Activated CD8-positive, alpha-beta T cell treated with anti-CD3 and anti-CD28 coated beads, Interleukin-2, amount 10 ng/mL, durations not matched to agents 7 days and 5 days (primary cell): ENCODE measurements at regions of chr11 and their contacts with region 1.

Region 1: GRCh38 chr11:3854977-3855807 is at the start of gene STIM1:
- DNase-seq: peak; percentile 98
- ATAC-seq: peak; percentile 77
- H3K4me3 Mint-ChIP-seq: peak within 1 kb of the TSS; percentile 88
- H3K27ac Mint-ChIP-seq: peak within 1 kb of the TSS; percentile 99
- H3K4me1 Mint-ChIP-seq: peaks cover 59% of the 10 kb centered on the region
- H3K27me3 Mint-ChIP-seq: no peaks in the 10 kb centered on the region
- total RNA-seq, gene STIM1: 97.3 to 104 TPM

Region 2: DNA sequence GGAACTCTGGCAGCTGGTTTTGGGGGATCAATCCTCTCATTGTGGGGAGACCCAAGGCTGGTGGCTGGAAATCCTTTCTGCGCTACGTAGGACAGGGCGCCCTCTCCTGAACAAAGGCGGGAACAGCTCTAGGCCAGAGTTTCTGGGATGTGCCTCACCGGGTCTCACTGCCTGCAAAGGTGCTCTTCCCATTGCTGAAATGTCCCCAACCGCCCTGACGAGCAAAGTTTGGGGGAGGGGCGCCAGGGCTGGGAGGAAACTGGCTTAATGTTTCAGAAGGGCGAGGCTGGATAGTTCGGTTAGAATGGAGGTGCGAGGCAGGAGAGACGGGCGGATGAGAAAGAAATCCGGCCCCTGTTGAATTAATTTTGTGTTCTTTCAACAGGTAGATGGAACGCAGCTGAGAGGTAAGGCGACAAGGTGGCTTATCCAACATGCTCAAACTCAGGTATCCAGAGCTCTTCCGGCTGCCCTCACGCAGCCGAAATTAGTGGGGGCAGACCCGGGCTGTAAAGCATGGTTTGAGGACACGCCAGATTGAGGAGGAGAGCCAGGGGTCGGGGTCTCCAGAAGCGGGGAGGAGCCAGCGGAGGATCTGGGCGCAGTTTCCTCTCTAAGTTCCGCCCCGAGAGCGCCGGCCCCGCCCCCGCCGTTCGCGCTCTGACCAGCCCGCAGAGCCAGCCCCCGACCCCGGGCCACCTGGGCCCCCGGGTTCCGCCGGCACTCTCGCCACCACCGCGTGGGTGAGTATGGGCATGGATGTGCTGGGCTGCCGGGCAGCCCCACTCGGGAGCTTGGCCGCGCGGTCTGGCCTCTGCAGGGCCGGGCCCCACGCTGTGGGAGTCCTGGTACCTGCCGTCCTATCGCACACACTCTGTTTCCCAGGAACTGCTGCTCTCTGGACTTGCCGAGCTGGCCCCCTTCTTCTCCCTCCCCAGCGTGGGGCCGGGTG is 47.0 kb before region 1 on chr11 and contains the start of gene PGAP2:
- CTCF ChIA-PET with region 1: interaction called, 11 read pairs
- POLR2A ChIA-PET with region 1: interaction called, 3 read pairs
- DNase-seq: peak; percentile 64
- ATAC-seq: peak; percentile 87
- H3K4me3 Mint-ChIP-seq: peak within 1 kb of the TSS; percentile 93
- H3K27ac Mint-ChIP-seq: peak within 1 kb of the TSS; percentile 85
- H3K4me1 Mint-ChIP-seq: peaks cover 21% of the 10 kb centered on the region
- H3K27me3 Mint-ChIP-seq: no peaks in the 10 kb centered on the region
- total RNA-seq, gene PGAP2: 23.8 to 25.7 TPM

Region 3: DNA sequence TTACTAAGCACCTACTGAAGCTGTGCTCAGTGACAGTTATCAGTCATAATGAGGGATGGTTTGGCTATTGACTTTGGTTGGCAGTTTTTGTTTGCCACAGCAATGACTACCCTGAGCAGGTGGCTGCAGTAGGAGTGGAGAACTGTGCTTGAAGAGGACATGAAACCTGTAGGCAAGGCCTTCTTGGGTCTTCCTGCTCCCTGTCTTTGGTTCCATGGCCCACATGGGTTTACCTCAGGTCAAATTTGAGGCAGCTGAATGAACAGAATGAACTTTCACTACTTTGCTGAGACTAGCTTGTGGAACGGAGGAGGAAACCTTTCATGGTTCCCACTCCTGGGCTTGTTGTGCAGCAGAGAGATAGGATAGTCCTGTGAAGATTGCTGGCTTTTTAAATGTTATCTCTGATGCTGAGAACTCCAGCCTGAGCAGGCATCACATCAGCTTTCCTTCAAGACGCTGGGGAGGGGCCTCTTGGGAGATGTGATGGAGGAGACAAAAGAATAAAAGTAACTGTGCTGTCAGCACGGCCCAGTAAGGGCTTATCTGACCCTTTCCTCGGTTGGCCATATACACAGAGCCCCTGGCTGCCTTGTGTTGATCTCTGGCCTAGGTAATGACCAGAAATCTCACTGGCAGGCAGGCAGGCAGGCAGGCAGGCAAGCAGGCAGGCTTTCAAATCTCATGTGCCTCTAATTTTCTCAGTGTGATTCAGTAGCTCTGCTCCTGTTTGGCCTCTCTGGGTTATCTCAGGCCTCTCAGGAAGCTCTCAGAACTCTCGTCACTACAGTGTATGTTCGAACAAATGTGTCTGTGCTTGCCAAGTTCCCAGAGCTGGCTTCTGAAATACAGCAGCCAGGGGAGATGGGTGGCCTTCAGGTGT is 12.3 kb after region 1 on chr11:
- CTCF ChIA-PET with region 1: interaction called, 133 read pairs
- POLR2A ChIA-PET with region 1: interaction called, 16 read pairs
- DNase-seq: no peak
- ATAC-seq: no peak
- H3K4me3 Mint-ChIP-seq: no peak overlapping the region
- H3K27ac Mint-ChIP-seq: peak overlapping the region; percentile 48
- H3K4me1 Mint-ChIP-seq: peaks cover 87% of the 10 kb centered on the region
- H3K27me3 Mint-ChIP-seq: no peaks in the 10 kb centered on the region

Region 4: DNA sequence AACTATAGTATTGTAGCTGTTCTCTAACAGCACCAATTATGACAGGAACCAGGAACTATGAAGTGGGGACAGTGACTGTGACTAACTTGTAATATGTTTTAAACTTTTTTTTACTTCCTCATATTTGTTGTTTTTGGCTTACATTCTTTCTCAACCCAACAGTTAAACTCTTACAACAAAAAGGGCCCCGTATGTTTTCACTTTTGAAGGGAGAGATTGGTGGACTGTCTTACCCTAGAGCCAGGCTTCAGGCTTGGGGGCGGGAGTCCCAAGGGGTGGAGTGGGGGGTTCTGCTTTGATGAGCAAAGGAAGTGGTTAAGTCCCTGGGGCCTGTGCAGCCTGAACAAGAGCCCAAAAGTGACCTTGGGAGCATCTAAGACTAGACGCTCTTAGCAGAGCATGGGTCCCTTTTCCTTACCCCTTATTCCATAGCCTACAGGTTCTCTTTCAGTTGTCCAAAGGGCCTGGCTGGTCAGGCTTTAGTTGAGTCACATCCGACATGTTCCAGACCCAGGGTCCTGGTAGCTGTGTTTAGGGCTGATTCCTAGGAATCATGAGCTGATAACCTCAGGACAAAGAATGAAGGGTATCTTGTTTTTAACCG is 39.0 kb after region 1 on chr11:
- CTCF ChIA-PET with region 1: interaction called, 27 read pairs
- POLR2A ChIA-PET with region 1: no interaction called
- DNase-seq: peak; percentile 57
- ATAC-seq: peak; percentile 84
- H3K4me3 Mint-ChIP-seq: peak overlapping the region; percentile 47
- H3K27ac Mint-ChIP-seq: peak overlapping the region; percentile 81
- H3K4me1 Mint-ChIP-seq: peaks cover 45% of the 10 kb centered on the region
- H3K27me3 Mint-ChIP-seq: no peaks in the 10 kb centered on the region

Region 5: DNA sequence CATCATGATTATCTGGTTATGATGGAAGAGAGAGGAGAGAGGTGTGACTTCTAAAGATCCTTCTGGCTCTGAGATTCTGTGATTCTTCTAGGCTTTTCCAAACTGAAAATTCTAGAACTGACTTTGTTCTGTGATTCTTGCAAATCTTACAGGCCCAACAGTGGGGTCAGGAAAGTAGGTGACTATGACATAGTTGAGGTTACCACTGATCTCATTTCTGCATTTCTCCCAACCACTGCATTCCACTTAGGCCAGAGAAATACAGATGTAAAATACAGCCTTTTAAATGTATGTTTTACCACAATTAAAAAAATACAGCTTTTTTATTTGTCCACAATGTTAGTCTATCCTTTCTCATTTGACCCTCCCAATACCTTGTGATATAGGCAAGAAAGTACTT is 84.0 kb after region 1 on chr11:
- CTCF ChIA-PET with region 1: interaction called, 74 read pairs
- POLR2A ChIA-PET with region 1: interaction called, 19 read pairs
- DNase-seq: no peak
- ATAC-seq: no peak
- H3K4me3 Mint-ChIP-seq: no peak overlapping the region
- H3K27ac Mint-ChIP-seq: no peak overlapping the region
- H3K4me1 Mint-ChIP-seq: peaks cover 83% of the 10 kb centered on the region
- H3K27me3 Mint-ChIP-seq: no peaks in the 10 kb centered on the region

Region 6: GRCh38 chr11:3984896-3985295 is 129.7 kb after region 1 on chr11:
- CTCF ChIA-PET with region 1: interaction called, 64 read pairs
- POLR2A ChIA-PET with region 1: interaction called, 10 read pairs
- DNase-seq: peak; percentile 64
- ATAC-seq: peak; percentile 70
- H3K4me3 Mint-ChIP-seq: no peak overlapping the region
- H3K27ac Mint-ChIP-seq: peak overlapping the region; percentile 9
- H3K4me1 Mint-ChIP-seq: peaks cover 82% of the 10 kb centered on the region
- H3K27me3 Mint-ChIP-seq: no peaks in the 10 kb centered on the region

Region 7: DNA sequence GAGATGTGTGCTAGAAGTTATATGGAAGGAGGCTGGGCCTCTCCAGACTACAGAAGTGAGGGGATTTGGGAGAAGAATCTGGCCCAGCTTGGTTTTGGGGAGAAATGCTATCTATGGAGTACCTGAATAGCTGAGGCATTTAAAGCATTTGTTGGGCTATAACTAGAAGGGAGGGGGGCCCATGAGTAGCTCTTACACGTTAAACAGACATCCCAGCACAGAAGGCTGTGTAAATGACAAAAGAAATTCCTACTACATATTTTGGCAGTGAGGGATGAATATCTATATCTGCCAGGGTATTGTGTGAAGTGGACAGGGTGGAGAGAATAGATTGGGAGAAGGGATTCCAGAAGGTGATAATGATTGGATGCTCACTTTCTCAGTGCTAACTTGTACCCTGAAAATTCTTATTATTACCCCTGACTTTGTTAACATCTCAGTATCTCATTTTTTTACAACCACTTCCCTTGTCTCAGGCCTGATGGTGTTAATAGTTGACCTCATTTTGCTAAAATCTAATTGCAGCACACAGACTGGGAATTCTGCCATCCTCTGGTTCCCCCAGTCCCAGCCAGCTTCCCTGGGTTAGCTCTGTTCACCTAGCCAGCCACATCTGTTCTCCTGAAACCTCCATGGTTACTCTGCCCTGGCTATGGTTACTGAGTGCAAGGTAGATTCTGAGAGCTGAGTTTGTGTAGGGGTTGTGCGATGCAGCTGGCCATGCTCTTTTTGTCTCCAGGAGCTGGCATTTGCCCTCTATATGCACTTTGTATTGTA is 210.6 kb after region 1 on chr11:
- CTCF ChIA-PET with region 1: interaction called, 630 read pairs
- POLR2A ChIA-PET with region 1: interaction called, 11 read pairs
- DNase-seq: no peak
- ATAC-seq: no peak
- H3K4me3 Mint-ChIP-seq: no peak overlapping the region
- H3K27ac Mint-ChIP-seq: no peak overlapping the region
- H3K4me1 Mint-ChIP-seq: peaks cover 55% of the 10 kb centered on the region
- H3K27me3 Mint-ChIP-seq: no peaks in the 10 kb centered on the region